Activated T-helper 2 cell treated with anti-CD3 and anti-CD28 coated beads, Interferon-gamma antibody, Interleukin-2, Interleukin-4, amounts not matched to agents 10 μg/mL and 5 μg/mL and 100 μg/mL, durations not matched to agents 14 hours and 24 hours and 36 hours (primary cell): ENCODE measurements at regions of chr16 and their contacts with region 1.

Region 1: GRCh38 chr16:53054670-53055485 is at the start of gene CHD9:
- DNase-seq: peak; percentile 69
- H3K4me3 Mint-ChIP-seq: peak within 1 kb of the TSS; percentile 84
- H3K27ac Mint-ChIP-seq: peak within 1 kb of the TSS; percentile 79
- H3K4me1 Mint-ChIP-seq: peaks cover 45% of the 10 kb centered on the region
- H3K27me3 Mint-ChIP-seq: no peaks in the 10 kb centered on the region
- total RNA-seq, gene CHD9: 25.0 and 27.1 TPM in 2 replicates

Region 2: GRCh38 chr16:53041320-53042051 is 13.4 kb before region 1 on chr16:
- intact Hi-C with region 1: no loop called
- DNase-seq: no peak
- H3K4me3 Mint-ChIP-seq: no peak overlapping the region
- H3K27ac Mint-ChIP-seq: no peak overlapping the region
- H3K4me1 Mint-ChIP-seq: no peaks in the 10 kb centered on the region
- H3K27me3 Mint-ChIP-seq: peaks cover 7% of the 10 kb centered on the region

Region 3: GRCh38 chr16:53099318-53100130 is 44.6 kb after region 1 on chr16:
- intact Hi-C with region 1: loop called (anchors 2 kb)
- DNase-seq: peak; percentile 37
- H3K4me3 Mint-ChIP-seq: peak overlapping the region; percentile 83
- H3K27ac Mint-ChIP-seq: peak overlapping the region; percentile 96
- H3K4me1 Mint-ChIP-seq: peaks cover 23% of the 10 kb centered on the region
- H3K27me3 Mint-ChIP-seq: no peaks in the 10 kb centered on the region

Region 4: DNA sequence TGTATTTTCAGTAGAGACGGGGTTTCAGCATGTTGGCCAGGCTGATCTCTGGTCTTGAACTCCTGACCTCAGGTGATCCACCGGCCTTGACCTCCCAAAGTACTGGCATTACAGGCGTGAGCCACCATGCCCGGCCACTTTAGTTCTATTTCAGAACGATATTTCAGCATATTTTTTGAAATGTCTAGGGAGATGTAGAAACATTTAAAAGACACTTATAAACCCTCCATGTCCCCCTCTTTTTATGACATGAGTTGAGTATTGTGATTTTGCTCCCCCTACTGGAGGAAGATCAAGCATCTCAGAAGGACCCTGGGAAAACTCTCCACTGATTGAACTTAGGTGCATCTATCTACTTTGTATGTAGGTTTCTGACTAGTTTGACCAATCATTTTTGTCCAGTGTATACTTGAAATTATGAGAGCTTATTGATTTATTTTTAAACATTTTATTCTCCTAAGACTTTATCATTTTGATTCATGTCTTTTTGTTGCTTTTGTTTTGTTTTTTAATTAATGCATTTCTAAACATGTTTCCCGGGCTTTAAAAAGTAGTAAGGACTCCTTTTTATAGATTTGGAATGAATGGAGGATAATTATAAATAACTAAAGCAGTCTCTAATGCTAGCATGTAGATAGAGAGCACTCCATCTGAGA is 105.0 kb after region 1 on chr16:
- intact Hi-C with region 1: loop called (anchors 1 kb)
- DNase-seq: no peak
- H3K4me3 Mint-ChIP-seq: no peak overlapping the region
- H3K27ac Mint-ChIP-seq: no peak overlapping the region
- H3K4me1 Mint-ChIP-seq: peaks cover 2% of the 10 kb centered on the region
- H3K27me3 Mint-ChIP-seq: no peaks in the 10 kb centered on the region

Region 5: DNA sequence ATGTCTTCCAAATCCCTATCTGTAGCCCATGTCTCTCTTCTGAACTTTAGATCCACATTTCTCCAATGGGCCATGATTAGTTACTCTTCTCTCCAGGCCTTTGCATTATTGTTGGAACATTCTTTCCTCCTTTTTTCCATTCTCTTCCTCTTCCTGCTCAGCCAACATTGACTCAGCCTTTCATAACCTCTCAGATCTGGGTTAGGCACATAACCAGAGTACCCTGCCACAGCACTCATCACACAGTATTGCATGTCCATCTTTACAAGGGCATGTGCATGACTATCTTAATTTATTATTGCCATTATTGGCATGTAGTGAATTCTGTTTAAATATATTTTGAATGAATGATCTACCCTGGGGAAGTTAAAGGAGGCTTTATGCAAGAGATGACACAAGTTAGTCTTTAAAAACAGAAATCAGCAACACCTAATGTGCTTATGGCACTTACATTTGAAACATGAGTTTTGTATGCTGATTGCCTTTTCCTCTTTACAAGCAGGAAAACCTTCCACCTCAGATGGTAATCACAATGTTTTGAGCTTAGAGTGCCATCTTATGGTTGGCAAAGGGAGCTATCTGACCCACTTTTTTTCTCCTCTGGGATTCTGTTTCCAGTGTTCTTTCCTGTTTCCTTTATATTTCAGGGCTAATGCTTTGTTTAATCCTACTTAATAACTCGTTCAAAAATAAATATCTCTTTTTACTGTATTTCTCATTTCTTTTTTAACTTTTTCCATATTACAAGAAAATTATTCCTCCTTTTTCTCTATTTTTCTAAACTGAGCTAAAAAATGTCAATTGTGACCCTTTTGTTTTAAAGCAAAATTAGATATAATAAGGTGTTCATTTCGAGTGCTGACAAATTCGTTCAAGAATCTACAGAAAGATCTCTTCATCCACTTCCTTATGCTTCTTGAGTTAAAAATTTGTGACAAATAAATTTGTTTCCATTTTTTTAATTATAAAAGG is 228.4 kb after region 1 on chr16:
- intact Hi-C with region 1: loop called (anchors 2 kb)
- DNase-seq: no peak
- H3K4me3 Mint-ChIP-seq: no peak overlapping the region
- H3K27ac Mint-ChIP-seq: no peak overlapping the region
- H3K4me1 Mint-ChIP-seq: no peaks in the 10 kb centered on the region
- H3K27me3 Mint-ChIP-seq: no peaks in the 10 kb centered on the region

Region 6: GRCh38 chr16:53509906-53510703 is 455.2 kb after region 1 on chr16:
- intact Hi-C with region 1: loop called (anchors 1 kb)
- DNase-seq: no peak
- H3K4me3 Mint-ChIP-seq: no peak overlapping the region
- H3K27ac Mint-ChIP-seq: no peak overlapping the region
- H3K4me1 Mint-ChIP-seq: peaks cover 25% of the 10 kb centered on the region
- H3K27me3 Mint-ChIP-seq: no peaks in the 10 kb centered on the region

Region 7: DNA sequence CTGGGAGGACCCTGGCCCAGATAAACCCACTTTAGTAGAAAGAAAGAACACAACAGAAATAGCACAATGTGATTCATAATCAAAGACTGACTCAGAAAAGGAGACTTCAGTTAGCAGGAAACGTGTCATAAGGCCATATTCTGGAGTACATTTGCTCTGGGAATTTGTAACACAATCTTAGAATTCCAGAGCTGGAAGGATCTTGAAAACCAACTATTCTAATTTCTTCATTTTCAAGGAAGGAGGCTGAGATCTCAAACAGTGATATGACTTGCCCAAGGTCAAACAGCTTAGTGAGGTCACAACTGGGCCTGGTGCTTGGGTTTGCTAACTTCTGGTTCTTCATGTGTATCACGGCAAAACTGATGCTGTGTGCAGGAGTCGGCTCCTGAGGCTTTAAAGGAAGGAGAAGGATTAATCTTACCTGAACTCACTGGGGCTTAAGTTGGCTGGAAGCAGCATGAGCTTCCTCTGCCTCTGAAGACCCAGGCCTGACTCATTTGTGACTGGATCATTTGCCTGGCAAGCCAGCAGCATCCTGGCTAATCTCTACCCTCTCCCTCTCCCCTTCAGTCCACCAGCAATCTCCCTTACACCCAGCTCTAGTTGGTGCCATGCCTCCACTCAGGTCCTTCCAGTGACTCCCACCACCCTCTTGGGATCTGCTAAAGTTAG is 1081.2 kb after region 1 on chr16:
- intact Hi-C with region 1: no loop called
- DNase-seq: no peak
- H3K4me3 Mint-ChIP-seq: no peak overlapping the region
- H3K27ac Mint-ChIP-seq: no peak overlapping the region
- H3K4me1 Mint-ChIP-seq: peaks cover 6% of the 10 kb centered on the region
- H3K27me3 Mint-ChIP-seq: peaks cover 5% of the 10 kb centered on the region